Activated CD4-positive, alpha-beta T cell treated with anti-CD3 and anti-CD28 coated beads for 36 hours (primary cell): ENCODE measurements at regions of chr1 and their contacts with region 1.

Region 1: GRCh38 chr1:15008783-15009729 is 144.5 kb upstream of the TMEM51 start:
- DNase-seq: no peak
- ATAC-seq: no peak
- H3K4me3 Mint-ChIP-seq: no peak overlapping the region
- H3K27ac Mint-ChIP-seq: no peak overlapping the region
- H3K4me1 Mint-ChIP-seq: no peaks in the 10 kb centered on the region
- H3K27me3 Mint-ChIP-seq: no peaks in the 10 kb centered on the region

Region 2: DNA sequence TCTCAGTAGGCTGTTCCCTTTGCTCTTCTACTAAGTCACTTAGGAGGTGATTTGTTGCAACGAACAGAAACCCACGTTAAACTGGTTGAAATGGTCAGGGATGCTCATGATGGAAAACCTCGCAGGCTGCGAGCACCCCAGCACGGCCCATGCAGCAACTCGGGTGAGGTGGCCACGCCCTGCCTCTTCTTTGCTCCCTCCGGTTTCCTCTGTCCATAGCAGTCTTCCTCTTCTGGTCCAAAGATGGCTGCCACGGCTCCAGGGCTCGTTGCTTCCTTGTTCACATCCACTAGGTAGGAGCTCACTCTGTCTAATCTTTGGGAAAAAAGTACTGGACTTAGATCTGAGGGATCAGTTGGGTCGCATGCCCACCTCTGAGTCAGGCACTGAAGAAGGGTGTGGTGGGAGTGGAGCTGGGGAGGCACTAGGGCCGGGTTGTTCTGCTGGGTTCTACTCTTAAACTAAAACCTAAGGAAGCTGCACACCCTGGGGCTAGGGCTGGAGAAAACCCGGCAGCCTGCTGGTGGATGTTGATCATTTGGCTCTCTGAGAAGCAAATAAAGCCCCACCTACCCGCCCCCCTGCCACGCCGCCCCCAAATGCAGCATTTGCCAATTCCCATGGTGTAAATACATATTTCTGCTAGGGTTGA is 379.6 kb before region 1 on chr1:
- CTCF ChIA-PET with region 1: no interaction called
- POLR2A ChIA-PET with region 1: interaction called, 10 read pairs
- intact Hi-C with region 1: no loop called
- DNase-seq: no peak
- ATAC-seq: no peak
- H3K4me3 Mint-ChIP-seq: no peak overlapping the region
- H3K27ac Mint-ChIP-seq: no peak overlapping the region
- H3K4me1 Mint-ChIP-seq: no peaks in the 10 kb centered on the region
- H3K27me3 Mint-ChIP-seq: no peaks in the 10 kb centered on the region